ENCODE measurements at regions of chr7 and their contacts with region 1.

Region 1: DNA sequence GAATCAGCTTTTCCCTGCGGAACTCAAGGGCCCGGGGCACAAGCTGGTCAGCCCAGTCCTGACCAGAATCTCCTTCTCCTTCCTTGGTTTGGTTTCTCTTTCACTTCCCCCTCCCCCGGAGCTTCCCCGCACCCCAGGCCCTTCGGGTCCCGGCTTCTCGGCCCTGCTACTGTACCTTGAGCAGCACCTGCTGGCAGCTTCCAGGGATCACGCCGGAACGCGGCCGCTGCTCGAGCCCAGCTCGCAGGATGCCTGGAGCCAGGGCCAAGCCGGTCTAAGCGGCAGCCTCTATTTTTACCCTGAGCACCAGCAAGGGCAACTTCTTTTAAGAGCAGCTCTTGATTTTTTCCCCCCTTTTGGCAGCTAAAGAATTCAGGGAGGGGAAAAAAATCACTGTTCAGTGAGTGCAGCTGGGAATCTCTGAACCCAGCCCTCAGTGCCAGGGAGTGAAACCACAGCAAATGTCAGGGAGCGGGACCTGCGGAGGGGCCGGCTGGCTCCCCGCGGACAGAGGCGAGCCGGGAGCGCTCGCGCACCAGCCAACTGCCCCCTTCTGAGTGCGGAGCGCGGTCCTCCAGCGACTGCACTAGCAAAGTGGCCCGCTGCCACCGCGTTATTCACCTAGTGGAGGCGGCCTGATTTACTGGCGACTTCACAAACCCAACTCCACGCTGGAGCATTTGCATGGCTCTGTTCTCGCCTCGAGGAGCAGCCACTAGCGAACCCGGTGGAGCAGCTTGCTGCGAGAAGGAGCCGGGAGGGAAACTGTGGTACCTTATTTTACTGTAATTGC is 2.4 kb upstream of the INHBA start:
- DNase-seq: peak; percentile 44
- H3K4me3 ChIP-seq: peak overlapping the region; percentile 46
- H3K27me3 ChIP-seq: no peaks in the 10 kb centered on the region
- CTCF ChIP-seq: peak; percentile 94

Region 2: DNA sequence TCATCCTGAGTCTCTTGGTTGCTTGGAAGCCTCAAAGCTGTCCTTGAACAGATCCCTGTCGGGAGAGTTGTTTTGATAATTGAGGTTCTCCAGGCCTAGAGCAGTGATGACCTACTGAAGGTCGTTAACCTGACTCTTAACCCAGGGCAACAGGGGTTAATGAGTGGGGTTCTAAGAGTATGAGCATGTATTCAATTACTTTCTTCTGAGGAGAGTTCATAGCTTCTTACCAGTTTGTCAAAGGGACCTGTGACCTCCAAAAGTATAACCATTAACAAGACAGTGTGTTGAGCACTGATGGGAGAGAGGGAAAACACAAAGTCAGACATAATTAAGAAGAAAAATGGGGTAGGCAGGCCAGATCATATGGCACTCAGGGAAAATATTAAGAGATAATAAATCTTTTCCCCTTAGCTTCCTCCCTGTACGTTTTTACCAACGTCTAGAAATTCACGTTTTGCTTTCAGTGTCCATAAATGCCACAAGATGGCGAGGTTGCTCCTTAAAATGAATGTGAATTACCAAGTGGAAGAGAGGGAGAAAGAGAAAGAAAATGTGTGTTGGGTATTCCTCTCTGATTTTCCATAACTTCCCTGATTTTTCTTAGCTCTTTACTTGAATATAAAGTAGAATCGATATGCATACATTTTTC is 1472.9 kb before region 1 on chr7:
- CTCF ChIA-PET with region 1: interaction called, 19 read pairs
- POLR2A ChIA-PET with region 1: no interaction called
- DNase-seq: no peak
- H3K4me3 ChIP-seq: no peak overlapping the region
- H3K27me3 ChIP-seq: no peaks in the 10 kb centered on the region
- CTCF ChIP-seq: peak; percentile 60

Region 3: DNA sequence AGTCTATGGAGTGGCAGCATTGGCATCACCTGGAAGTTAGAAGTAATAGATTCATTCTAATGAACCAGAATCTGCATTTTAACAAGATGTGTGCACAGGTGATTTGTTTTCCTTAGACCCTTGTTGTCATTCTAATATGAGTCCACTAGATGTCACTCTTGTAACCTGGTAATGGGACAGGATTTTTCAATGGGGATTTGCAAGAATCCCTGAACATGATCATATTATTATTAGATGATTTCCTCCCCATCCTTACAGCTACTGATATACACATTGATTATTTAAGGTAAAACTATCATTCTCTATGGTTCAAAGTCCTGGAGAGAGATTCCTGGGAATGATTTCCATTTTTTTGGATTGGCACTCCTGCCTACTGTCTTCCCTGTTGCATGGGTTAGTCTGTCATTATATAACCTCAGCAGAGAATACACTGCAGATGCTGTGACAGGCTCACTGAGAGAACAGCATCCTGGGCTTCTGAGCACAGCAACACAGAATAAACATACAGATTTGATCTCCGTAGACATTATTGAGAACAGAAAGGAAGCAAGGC is 1375.6 kb before region 1 on chr7:
- CTCF ChIA-PET with region 1: interaction called, 12 read pairs
- POLR2A ChIA-PET with region 1: no interaction called
- DNase-seq: peak; percentile 31
- H3K4me3 ChIP-seq: no peak overlapping the region
- H3K27me3 ChIP-seq: no peaks in the 10 kb centered on the region
- CTCF ChIP-seq: peak; percentile 59

Region 4: GRCh38 chr7:40763318-40764287 is 941.7 kb before region 1 on chr7:
- CTCF ChIA-PET with region 1: interaction called, 31 read pairs
- POLR2A ChIA-PET with region 1: no interaction called
- DNase-seq: peak; percentile 64
- H3K4me3 ChIP-seq: no peak overlapping the region
- H3K27me3 ChIP-seq: no peaks in the 10 kb centered on the region
- CTCF ChIP-seq: peak; percentile 51

Region 5: DNA sequence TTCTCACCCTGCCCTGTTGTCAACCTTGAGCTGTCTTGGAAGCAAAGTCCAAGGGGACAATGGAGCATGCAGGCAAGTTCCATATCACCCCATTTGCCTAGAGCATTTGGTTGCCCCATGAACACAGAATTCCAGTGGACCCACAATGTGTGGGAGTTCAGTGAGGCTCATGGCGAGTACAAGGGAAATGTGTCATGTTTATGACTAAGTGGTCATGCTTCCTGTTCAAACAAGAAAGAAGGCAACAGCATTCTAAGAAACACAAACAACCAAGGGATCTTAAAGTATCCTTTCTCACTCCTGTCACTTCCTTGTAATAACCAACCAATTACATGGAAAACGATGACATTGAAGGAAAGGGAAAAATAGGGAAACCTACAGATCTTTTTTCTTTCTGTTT is 515.4 kb before region 1 on chr7:
- CTCF ChIA-PET with region 1: interaction called, 4 read pairs
- POLR2A ChIA-PET with region 1: interaction called, 10 read pairs
- DNase-seq: peak; percentile 58
- H3K4me3 ChIP-seq: no peak overlapping the region
- H3K27me3 ChIP-seq: no peaks in the 10 kb centered on the region
- CTCF ChIP-seq: no peak

Region 6: GRCh38 chr7:41861642-41862041 is 156.3 kb after region 1 on chr7:
- CTCF ChIA-PET with region 1: no interaction called
- POLR2A ChIA-PET with region 1: no interaction called
- DNase-seq: no peak
- H3K4me3 ChIP-seq: no peak overlapping the region
- H3K27me3 ChIP-seq: no peaks in the 10 kb centered on the region
- CTCF ChIP-seq: no peak

Measured in BJ (cell line).